ENCODE measurements at regions of chr10 and their contacts with region 1.

Region 1: GRCh38 chr10:106609470-106610266 is 554.8 kb downstream of the SORCS1 start:
- DNase-seq: no peak
- H3K4me3 Mint-ChIP-seq: no peak overlapping the region
- H3K27ac Mint-ChIP-seq: no peak overlapping the region
- H3K4me1 Mint-ChIP-seq: peaks cover 58% of the 10 kb centered on the region
- H3K27me3 Mint-ChIP-seq: no peaks in the 10 kb centered on the region
- CTCF ChIP-seq: no peak

Region 2: DNA sequence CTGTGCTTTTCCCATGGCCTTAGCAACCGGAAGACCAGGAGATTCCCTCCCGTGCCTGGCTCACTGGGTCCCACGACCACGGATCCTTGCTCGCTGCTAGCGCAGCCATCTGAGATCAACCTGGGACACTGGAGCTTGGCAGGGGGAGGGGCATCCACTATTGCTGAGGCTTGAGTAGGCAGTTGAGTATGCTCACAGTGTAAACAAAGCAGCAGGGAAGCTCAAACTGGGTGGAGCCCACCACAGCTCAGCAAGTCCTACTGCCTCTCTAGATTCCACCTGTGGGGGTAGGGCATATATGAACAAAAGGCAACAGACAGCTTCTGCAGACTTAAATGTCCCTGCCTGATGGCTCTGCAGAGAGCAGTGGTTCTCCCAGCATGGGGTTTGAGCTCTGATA is 142.2 kb before region 1 on chr10:
- CTCF ChIA-PET with region 1: no interaction called
- intact Hi-C with region 1: no loop called
- DNase-seq: peak; percentile 1
- H3K4me3 Mint-ChIP-seq: no peak overlapping the region
- H3K27ac Mint-ChIP-seq: no peak overlapping the region
- H3K4me1 Mint-ChIP-seq: no peaks in the 10 kb centered on the region
- H3K27me3 Mint-ChIP-seq: no peaks in the 10 kb centered on the region
- CTCF ChIP-seq: no peak

Region 3: DNA sequence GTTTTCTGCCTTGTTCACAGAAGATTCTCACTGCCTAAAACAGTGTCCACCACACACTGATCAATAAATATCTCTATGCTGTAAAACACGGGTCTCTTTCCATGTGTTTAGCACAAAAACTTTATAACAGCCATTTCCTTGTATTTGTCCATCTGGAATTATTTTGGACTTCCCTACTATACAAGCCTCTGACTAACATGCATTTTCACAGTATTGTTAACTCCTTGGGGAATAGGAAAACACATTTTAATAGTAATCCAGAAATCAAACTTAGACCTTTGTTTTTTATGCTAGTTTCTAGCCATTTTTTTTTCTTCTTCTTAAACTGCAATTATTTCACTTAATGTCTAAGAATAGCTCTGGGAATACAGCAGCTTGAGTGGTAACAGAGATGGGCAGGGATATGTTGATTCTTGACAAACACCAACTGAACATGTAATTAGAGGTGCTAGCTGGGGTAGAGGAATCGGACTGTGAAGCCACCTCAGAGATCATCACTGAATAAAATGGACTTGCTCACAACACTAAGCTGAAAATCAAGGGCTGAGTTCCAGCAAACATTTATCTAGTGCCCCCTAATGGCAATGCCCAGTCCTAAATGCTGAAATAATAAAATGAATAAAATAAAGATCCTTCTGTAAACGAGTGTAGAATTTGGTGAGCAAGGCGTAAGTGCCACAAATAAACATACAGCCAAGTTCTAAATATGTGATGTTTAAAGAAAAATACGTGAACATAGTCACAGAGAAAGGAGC is 38.3 kb before region 1 on chr10:
- CTCF ChIA-PET with region 1: no interaction called
- intact Hi-C with region 1: loop called (anchors 5 kb)
- DNase-seq: peak; percentile 4
- H3K4me3 Mint-ChIP-seq: no peak overlapping the region
- H3K27ac Mint-ChIP-seq: no peak overlapping the region
- H3K4me1 Mint-ChIP-seq: peaks cover 9% of the 10 kb centered on the region
- H3K27me3 Mint-ChIP-seq: no peaks in the 10 kb centered on the region
- CTCF ChIP-seq: peak; percentile 37

Region 4: GRCh38 chr10:106661767-106662140 is 52.1 kb after region 1 on chr10:
- CTCF ChIA-PET with region 1: no interaction called
- intact Hi-C with region 1: no loop called
- DNase-seq: no peak
- H3K4me3 Mint-ChIP-seq: no peak overlapping the region
- H3K27ac Mint-ChIP-seq: no peak overlapping the region
- H3K4me1 Mint-ChIP-seq: no peaks in the 10 kb centered on the region
- H3K27me3 Mint-ChIP-seq: no peaks in the 10 kb centered on the region
- CTCF ChIP-seq: no peak

Region 5: DNA sequence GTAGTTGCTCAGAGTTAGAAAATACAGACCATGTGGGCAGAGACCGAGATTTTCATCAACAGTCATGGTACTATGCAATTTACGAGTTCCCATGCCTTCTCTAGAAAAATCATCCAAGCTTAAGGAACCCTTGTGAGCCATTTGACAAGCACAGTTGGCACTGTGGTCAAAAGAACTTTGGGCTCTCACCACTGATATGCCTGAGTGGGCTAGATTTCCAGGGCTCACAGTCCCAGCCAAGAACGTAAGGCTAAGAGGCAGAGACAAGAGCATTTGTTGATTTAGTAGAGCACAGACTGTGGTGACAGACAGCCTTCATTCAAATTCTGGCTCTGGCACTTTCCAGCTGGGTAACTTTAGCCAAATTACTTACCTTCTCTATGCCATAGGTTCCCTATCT is 147.9 kb after region 1 on chr10:
- CTCF ChIA-PET with region 1: no interaction called
- intact Hi-C with region 1: no loop called
- DNase-seq: no peak
- H3K4me3 Mint-ChIP-seq: no peak overlapping the region
- H3K27ac Mint-ChIP-seq: no peak overlapping the region
- H3K4me1 Mint-ChIP-seq: no peaks in the 10 kb centered on the region
- H3K27me3 Mint-ChIP-seq: no peaks in the 10 kb centered on the region
- CTCF ChIP-seq: no peak

Measured in Calu3 (cell line).